CD4-positive, alpha-beta T cell (primary cell): ENCODE measurements at regions of chr17 and their contacts with region 1.

Region 1: DNA sequence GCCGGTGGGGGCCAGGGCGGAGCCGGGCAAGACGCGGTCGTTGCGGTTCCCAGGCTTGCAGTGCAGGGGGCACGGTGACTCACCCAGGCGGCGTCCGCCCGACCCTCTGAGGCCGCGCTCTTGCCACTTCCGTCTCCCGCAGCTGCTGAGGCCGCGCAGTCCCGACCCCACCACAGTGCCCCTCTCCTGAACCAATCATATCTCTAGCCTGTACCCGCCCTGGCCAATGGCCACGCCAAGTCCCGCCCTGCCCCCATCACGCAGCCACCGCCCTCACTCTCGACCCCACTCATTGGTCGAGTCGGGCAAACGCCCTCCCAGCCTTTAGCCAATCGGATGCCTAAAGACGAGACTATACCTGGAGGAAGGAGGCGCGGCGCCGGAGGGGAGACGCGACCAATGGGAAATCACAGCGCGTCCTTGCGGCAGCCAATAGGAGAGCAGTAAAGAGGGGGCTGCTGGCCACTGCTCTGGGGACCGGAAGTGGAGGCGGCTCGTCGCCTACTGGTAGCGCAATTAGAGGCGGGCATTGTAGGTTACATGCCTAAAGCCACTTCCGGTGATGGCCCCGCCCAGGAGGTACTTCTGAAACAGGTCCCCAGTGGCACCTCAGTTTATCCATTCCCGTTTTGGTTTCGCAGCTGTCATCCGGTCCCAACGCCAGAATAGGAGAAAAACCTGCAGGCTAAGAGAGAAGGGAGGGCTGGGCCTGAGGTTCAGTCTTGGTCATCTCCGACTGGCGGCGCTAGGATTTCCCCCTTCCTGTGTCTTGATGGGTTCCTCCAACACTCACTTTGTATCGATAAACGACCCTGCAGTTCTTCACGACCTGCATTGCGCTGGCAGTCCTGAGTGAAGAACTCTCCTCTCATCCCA is 3.5 kb upstream of the MTMR4 start:
- DNase-seq: peak; percentile 98 to 100 (median 99)
- ATAC-seq: peak; percentile 81
- H3K4me3 ChIP-seq: peak overlapping the region; percentile 72
- H3K4me3 Mint-ChIP-seq: peak overlapping the region; percentile 90
- H3K27ac ChIP-seq: peak overlapping the region; percentile 78 to 80
- H3K27ac Mint-ChIP-seq: peak overlapping the region; percentile 85
- H3K4me1 ChIP-seq: peaks cover 48% of the 10 kb centered on the region
- H3K4me1 Mint-ChIP-seq: peaks cover 44% of the 10 kb centered on the region
- H3K27me3 ChIP-seq: no peaks in the 10 kb centered on the region
- H3K27me3 Mint-ChIP-seq: no peaks in the 10 kb centered on the region
- CTCF ChIP-seq: no peak

Region 2: DNA sequence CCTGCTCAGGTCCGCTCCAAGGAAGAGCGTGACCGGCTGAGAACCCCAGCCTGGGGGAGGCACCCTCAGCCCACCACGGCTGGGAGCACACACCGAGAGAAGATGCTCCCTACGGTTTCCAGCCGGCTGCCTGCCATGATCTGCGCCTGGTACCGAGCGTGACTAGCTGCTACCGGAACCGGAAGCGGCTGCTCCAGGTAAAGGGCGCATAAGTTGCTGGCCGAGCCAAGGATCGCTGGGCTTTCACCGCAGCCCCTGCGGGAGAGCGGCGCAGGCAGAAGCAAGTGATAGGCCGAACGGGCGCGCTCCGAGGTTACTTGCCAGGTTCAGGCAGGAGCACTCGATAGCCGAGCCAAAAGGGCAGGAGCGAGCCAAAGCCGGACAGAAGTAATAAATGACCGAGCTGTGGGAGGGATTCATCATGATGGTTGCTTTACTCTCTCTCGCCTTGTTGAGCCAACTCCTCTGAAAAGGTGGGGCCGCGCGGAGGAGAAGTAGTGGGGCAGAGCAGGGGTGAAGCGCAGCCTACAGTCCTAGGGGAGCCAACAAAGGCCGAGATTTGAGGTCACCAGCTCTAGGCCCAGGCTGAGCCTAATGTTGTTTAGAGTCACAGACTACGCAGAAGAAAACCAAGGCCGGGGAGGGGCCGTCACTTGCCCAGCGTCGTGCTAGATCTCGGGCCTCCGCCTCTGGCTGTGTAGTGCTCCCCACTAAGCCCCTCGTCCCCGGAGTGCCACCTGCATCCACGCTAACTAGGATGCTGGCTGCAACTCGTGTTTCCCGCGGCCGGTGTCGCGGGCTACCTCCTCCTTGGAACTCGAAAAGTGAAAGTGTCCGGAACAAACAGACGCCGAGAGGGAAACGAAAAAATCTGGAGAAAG is 667.9 kb before region 1 on chr17 and contains the start of gene MRPS23:
- CTCF ChIA-PET with region 1: no interaction called
- POLR2A ChIA-PET with region 1: interaction called, 3 read pairs
- intact Hi-C with region 1: loop called in 1 of 2 experiments (anchors 5 kb)
- DNase-seq: peak; percentile 92 to 99 (median 95)
- ATAC-seq: peak; percentile 91
- H3K4me3 ChIP-seq: peak within 1 kb of the TSS; percentile 99
- H3K4me3 Mint-ChIP-seq: peak within 1 kb of the TSS; percentile 95
- H3K27ac ChIP-seq: peak within 1 kb of the TSS; percentile 88 to 93
- H3K27ac Mint-ChIP-seq: peak within 1 kb of the TSS; percentile 97
- H3K4me1 ChIP-seq: peaks cover 42% of the 10 kb centered on the region
- H3K4me1 Mint-ChIP-seq: peaks cover 45% of the 10 kb centered on the region
- H3K27me3 ChIP-seq: no peaks in the 10 kb centered on the region
- H3K27me3 Mint-ChIP-seq: no peaks in the 10 kb centered on the region
- CTCF ChIP-seq: no peak
- total RNA-seq, gene MRPS23: 14.6 to 14.7 TPM

Region 3: GRCh38 chr17:58337600-58338453 is 180.1 kb before region 1 on chr17:
- CTCF ChIA-PET with region 1: no interaction called
- POLR2A ChIA-PET with region 1: interaction called, 6 read pairs
- intact Hi-C with region 1: loop called (anchors 5 to 10 kb)
- DNase-seq: peak; percentile 78 to 96 (median 88)
- ATAC-seq: peak; percentile 73
- H3K4me3 ChIP-seq: peak overlapping the region; percentile 84
- H3K4me3 Mint-ChIP-seq: peak overlapping the region; percentile 90
- H3K27ac ChIP-seq: peak overlapping the region; percentile 97 to 98
- H3K27ac Mint-ChIP-seq: peak overlapping the region; percentile 84
- H3K4me1 ChIP-seq: peaks cover 96% of the 10 kb centered on the region
- H3K4me1 Mint-ChIP-seq: peaks cover 92% of the 10 kb centered on the region
- H3K27me3 ChIP-seq: no peaks in the 10 kb centered on the region
- H3K27me3 Mint-ChIP-seq: no peaks in the 10 kb centered on the region
- CTCF ChIP-seq: no peak

Region 4: DNA sequence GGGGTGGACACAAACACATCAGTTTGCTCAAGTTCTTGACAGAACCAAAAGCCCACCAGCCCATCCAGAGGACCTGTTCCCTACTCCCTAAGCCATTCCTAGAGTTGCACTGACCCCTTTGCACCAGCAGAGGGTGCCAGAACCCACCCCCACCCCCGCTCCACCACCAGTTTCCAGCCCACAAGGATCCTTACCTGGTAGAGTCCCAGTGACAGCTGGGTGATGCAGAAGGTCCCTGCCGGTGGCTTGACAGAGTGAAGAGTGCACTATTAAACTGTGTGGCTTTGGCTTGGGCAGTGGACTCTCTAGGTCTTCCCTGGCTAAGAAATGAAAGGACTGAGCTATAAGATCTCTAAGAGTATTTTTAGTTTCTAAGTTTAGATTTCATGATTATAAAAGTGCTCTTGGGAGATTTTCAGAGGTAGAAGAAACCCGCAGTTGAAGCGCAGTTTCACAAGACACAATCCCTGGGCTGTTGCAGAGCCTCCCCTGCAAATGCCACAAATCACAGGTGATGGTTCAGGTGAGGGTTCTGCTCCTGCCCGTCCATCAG is 69.8 kb after region 1 on chr17:
- CTCF ChIA-PET with region 1: interaction called, 8 read pairs
- POLR2A ChIA-PET with region 1: interaction called, 3 read pairs
- intact Hi-C with region 1: loop called (anchors 2 kb)
- DNase-seq: peak; percentile 33 to 81 (median 47)
- ATAC-seq: peak; percentile 92
- H3K4me3 ChIP-seq: no peak overlapping the region
- H3K4me3 Mint-ChIP-seq: no peak overlapping the region
- H3K27ac ChIP-seq: no peak overlapping the region
- H3K27ac Mint-ChIP-seq: no peak overlapping the region
- H3K4me1 ChIP-seq: peaks cover 5% of the 10 kb centered on the region
- H3K4me1 Mint-ChIP-seq: peaks cover 4% of the 10 kb centered on the region
- H3K27me3 ChIP-seq: no peaks in the 10 kb centered on the region
- H3K27me3 Mint-ChIP-seq: peaks cover 8% of the 10 kb centered on the region
- CTCF ChIP-seq: peak; percentile 91

Region 5: DNA sequence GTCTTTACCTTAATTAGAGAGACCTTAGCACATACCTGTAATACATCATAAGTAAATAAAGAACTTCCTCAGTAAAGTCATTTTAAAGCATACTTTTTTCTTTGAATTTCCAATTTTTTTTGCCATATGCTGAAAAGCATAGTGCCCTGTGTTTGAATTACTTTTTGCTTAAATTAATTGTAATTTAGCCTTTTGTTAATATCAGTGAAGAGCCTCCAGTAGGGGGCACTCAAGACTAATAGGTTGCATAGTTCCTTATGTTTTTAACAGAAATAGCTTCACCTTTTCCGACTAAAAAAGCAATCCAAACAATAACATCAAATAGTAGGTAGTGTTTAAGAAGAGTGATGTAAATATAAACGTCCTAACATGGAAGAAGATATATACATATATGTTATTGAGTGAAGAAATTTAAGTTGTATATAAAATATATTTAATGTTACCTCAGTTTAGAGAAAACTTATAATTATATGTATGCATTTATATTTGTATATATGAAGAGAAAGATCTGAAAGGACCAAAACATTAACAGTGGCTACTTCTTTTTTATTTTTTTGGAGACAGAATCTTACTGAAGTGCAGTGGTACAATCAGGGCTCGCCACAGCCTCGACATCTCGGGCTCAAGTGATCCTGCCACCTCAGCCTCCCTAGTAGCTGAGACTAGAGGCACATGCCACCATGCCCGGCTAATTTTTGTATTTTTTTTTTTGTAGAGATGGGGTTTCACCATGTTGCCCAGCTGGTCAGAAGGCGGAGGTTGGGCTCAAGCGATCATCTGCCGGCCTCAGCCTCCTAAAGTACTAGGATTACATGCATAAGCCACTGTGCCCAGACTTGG is 193.2 kb after region 1 on chr17:
- CTCF ChIA-PET with region 1: interaction called, 3 read pairs
- POLR2A ChIA-PET with region 1: no interaction called
- intact Hi-C with region 1: loop called in 1 of 2 experiments (anchors 5 kb)
- DNase-seq: peak in 9 of 14 experiments; percentile 3 to 70 (median 38)
- ATAC-seq: no peak
- H3K4me3 ChIP-seq: no peak overlapping the region
- H3K4me3 Mint-ChIP-seq: no peak overlapping the region
- H3K27ac ChIP-seq: no peak overlapping the region
- H3K27ac Mint-ChIP-seq: no peak overlapping the region
- H3K4me1 ChIP-seq: no peaks in the 10 kb centered on the region
- H3K4me1 Mint-ChIP-seq: no peaks in the 10 kb centered on the region
- H3K27me3 ChIP-seq: no peaks in the 10 kb centered on the region
- H3K27me3 Mint-ChIP-seq: no peaks in the 10 kb centered on the region
- CTCF ChIP-seq: peak; percentile 85

Region 6: DNA sequence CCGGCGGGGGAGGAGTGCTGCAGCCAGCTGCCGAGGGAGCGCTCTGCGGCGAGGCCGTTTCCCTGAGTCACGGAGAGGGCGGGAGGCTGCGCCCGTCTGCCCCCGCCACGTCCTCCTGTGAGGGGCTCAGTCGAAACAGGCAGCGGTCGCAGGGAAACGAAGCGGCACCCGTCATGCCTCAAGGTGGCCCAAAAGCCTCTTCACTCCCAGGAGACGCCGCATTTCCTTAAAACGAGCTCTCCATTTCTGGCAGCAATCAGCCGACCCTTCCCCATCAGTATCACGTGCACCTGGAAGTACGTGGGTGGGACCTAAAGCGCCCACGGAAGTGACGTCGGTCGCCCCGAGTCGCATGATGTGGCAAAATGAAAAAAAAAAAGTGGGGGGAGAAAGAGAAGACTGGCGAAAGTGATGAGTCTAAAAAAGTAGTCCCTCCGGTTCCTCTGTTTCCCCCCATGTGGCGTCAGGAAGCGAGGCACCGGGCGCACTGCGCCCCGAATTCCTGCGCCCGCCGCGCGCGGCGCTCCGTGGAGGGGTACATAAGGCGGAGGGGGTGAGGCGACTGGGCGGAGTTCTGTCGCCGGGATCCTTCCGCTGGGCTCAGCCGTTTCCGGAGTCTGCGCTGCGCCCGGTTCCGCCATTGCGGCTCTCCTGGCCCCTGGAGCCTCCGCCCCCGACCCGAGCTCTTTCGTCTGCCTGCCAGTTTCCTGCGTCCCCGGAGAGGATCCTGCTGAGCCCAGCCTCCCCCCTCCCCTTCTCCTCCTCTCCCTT is 1101.5 kb after region 1 on chr17 and contains the start of gene CLTC:
- CTCF ChIA-PET with region 1: no interaction called
- POLR2A ChIA-PET with region 1: no interaction called
- intact Hi-C with region 1: loop called in 1 of 2 experiments (anchors 10 kb)
- DNase-seq: peak; percentile 81 to 98 (median 88)
- ATAC-seq: peak; percentile 82
- H3K4me3 ChIP-seq: peak within 1 kb of the TSS; percentile 96
- H3K4me3 Mint-ChIP-seq: peak within 1 kb of the TSS; percentile 97
- H3K27ac ChIP-seq: peak within 1 kb of the TSS; percentile 95 to 96
- H3K27ac Mint-ChIP-seq: peak within 1 kb of the TSS; percentile 98
- H3K4me1 ChIP-seq: peaks cover 22% of the 10 kb centered on the region
- H3K4me1 Mint-ChIP-seq: peaks cover 66% of the 10 kb centered on the region
- H3K27me3 ChIP-seq: no peaks in the 10 kb centered on the region
- H3K27me3 Mint-ChIP-seq: no peaks in the 10 kb centered on the region
- CTCF ChIP-seq: no peak
- total RNA-seq, gene CLTC: 81.5 to 89.9 TPM